ENCODE measurements at regions of chr9 and their contacts with region 1.

Region 1: GRCh38 chr9:129610473-129611301 is 10.2 kb downstream of the C9orf50 start:
- DNase-seq: peak; percentile 72 to 76 (median 74)
- H3K4me3 ChIP-seq: peak overlapping the region; percentile 61 to 70
- H3K4me3 Mint-ChIP-seq: peak overlapping the region; percentile 78 to 95 (median 81)
- H3K27ac ChIP-seq: peak overlapping the region; percentile 50
- H3K27ac Mint-ChIP-seq: peak overlapping the region; percentile 65 to 95 (median 88)
- H3K4me1 ChIP-seq: peaks cover 28% of the 10 kb centered on the region
- H3K4me1 Mint-ChIP-seq: peaks cover 16 to 45% (median 33%) of the 10 kb centered on the region in 4 donors
- H3K27me3 ChIP-seq: no peaks in the 10 kb centered on the region
- H3K27me3 Mint-ChIP-seq: no peaks in the 10 kb centered on the region

Region 2: GRCh38 chr9:129139993-129140396 is 470.7 kb before region 1 on chr9:
- CTCF ChIA-PET with region 1: interaction called, 25 read pairs
- POLR2A ChIA-PET with region 1: interaction called, 42 read pairs
- intact Hi-C with region 1: loop called (anchors 1 kb)
- DNase-seq: peak; percentile 70 to 92 (median 73)
- H3K4me3 ChIP-seq: peak overlapping the region; percentile 78 to 82
- H3K4me3 Mint-ChIP-seq: peak overlapping the region; percentile 86 to 95 (median 90)
- H3K27ac ChIP-seq: peak overlapping the region; percentile 90
- H3K27ac Mint-ChIP-seq: peak overlapping the region; percentile 90 to 99 (median 92)
- H3K4me1 ChIP-seq: peaks cover 38% of the 10 kb centered on the region
- H3K4me1 Mint-ChIP-seq: peaks cover 15 to 37% (median 29%) of the 10 kb centered on the region in 4 donors
- H3K27me3 ChIP-seq: no peaks in the 10 kb centered on the region
- H3K27me3 Mint-ChIP-seq: no peaks in the 10 kb centered on the region

Region 3: GRCh38 chr9:129320575-129321263 is 290.0 kb before region 1 on chr9:
- CTCF ChIA-PET with region 1: interaction called, 3 read pairs
- POLR2A ChIA-PET with region 1: interaction called, 4 read pairs
- intact Hi-C with region 1: loop called (anchors 1 kb)
- DNase-seq: peak; percentile 63 to 74 (median 68)
- H3K4me3 ChIP-seq: peak overlapping the region in 1 of 2 donors; percentile 51
- H3K4me3 Mint-ChIP-seq: peak overlapping the region; percentile 62 to 90 (median 82)
- H3K27ac ChIP-seq: no peak overlapping the region
- H3K27ac Mint-ChIP-seq: peak overlapping the region in 6 of 7 donors; percentile 50 to 97 (median 78)
- H3K4me1 ChIP-seq: peaks cover 20% of the 10 kb centered on the region
- H3K4me1 Mint-ChIP-seq: peaks cover 5 to 20% (median 9%) of the 10 kb centered on the region in 4 donors
- H3K27me3 ChIP-seq: no peaks in the 10 kb centered on the region
- H3K27me3 Mint-ChIP-seq: peaks cover 0 to 1% of the 10 kb centered on the region in 2 donors

Region 4: DNA sequence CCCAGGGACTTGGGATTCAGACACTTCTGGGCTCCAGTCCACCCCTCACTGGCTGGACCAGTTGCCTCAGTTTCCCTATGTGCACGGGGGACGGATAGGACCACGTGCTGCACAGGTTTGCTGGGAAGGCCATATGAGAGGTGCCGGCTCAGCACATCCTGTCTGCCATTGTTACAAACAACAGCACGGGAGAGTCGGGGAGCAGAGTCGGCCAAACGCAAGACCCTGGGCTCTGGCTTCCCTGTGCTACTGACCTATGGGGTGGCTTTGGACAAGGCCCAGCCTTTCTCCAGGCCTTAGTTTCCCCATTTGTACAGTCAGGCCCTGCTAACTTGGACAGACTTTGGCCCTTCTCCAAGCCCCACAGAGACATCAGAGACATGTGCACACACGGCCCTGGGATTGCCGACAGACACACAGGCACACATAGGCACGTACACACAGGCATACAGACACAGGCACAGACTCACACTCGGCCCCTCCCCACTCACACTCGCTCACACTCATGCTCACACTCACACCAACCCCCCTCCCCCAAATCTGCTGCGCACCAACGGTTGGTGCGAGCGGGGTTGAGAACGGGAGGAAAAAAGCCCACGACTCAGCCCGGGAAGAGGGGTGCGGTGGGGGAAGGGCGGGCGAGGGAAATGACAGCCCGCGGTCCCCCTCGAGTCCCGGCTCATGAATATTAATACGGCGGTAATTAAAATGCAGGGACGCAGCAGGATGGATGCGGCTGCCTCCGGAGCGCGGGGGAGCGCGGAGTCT is 122.9 kb before region 1 on chr9:
- CTCF ChIA-PET with region 1: no interaction called
- POLR2A ChIA-PET with region 1: no interaction called
- intact Hi-C with region 1: loop called (anchors 1 kb)
- DNase-seq: peak in 2 of 5 donors; percentile 50 to 73
- H3K4me3 ChIP-seq: peak overlapping the region; percentile 38 to 52
- H3K4me3 Mint-ChIP-seq: peak overlapping the region; percentile 87 to 93 (median 90)
- H3K27ac ChIP-seq: peak overlapping the region; percentile 91
- H3K27ac Mint-ChIP-seq: peak overlapping the region; percentile 93 to 100 (median 98)
- H3K4me1 ChIP-seq: peaks cover 65% of the 10 kb centered on the region
- H3K4me1 Mint-ChIP-seq: peaks cover 33 to 80% (median 54%) of the 10 kb centered on the region in 4 donors
- H3K27me3 ChIP-seq: no peaks in the 10 kb centered on the region
- H3K27me3 Mint-ChIP-seq: peaks cover 0 to 3% of the 10 kb centered on the region in 2 donors

Region 5: DNA sequence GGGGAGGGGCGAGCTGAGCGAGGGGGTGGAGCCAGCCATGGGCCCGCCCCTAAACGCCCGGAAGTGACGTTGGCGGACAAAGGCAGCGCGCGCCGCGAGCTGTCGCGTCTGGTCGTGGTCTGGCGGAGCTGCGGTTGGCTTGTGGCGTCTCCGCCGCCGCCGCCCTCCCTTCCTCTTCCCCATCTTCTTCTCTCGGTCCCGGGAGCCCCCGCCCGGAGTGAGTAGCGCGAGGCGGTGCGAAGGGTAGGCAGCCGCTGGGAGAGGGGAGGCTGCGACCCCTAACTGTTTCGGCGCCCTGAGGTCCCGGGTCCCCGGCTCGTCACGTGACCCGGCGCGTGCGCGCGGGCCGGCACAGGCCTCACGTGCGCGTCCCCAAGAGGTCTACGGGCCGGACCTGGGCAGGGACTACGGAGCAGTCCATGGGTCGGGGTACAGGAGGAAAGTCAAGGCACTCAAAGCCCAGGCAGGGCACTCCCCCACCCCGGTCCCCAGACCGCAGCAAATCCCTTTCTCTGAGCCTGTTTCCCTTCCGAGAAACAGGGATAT is 15.5 kb after region 1 on chr9 and contains the start of gene NTMT1:
- CTCF ChIA-PET with region 1: interaction called, 51 read pairs
- POLR2A ChIA-PET with region 1: interaction called, 6 read pairs
- intact Hi-C with region 1: no loop called
- DNase-seq: peak; percentile 88 to 91 (median 90)
- H3K4me3 ChIP-seq: peak within 1 kb of the TSS; percentile 80 to 98
- H3K4me3 Mint-ChIP-seq: peak within 1 kb of the TSS; percentile 84 to 93 (median 89)
- H3K27ac ChIP-seq: peak within 1 kb of the TSS; percentile 91
- H3K27ac Mint-ChIP-seq: peak within 1 kb of the TSS; percentile 89 to 96 (median 95)
- H3K4me1 ChIP-seq: peaks cover 48% of the 10 kb centered on the region
- H3K4me1 Mint-ChIP-seq: peaks cover 27 to 72% (median 53%) of the 10 kb centered on the region in 4 donors
- H3K27me3 ChIP-seq: peaks cover under 1% of the 10 kb centered on the region
- H3K27me3 Mint-ChIP-seq: peaks cover 5 to 14% of the 10 kb centered on the region in 2 donors
- total RNA-seq, gene NTMT1: 45.0 to 45.3 TPM

Region 6: DNA sequence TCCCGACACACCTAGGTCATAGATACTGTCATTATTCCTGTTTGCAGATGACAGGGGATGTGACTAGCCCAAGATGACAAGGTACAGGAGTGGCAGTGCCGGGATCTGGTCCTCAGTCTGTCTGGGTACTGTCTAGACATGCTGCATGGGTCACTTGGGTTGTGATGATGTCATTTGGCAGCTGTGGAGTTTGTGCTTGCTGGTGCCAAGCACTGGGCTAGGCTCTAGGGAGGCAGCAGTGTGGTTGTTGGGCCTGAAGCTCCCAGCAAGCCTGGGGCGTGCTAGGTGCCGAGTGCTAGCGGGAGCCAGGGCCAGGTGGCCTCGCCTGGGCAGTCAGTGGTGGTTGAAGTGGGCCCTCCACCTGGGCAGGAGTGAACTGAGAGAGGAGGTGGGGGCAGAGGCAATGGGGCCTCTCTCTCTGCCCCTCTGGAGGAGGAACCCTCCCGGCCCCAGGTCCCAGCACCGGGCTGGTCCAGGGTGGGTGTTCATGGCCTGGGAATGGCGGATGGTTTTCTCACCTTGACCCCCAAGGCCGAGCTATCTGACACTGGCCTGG is 40.1 kb after region 1 on chr9:
- CTCF ChIA-PET with region 1: no interaction called
- POLR2A ChIA-PET with region 1: no interaction called
- intact Hi-C with region 1: no loop called
- DNase-seq: no peak
- H3K4me3 ChIP-seq: no peak overlapping the region
- H3K4me3 Mint-ChIP-seq: no peak overlapping the region
- H3K27ac ChIP-seq: no peak overlapping the region
- H3K27ac Mint-ChIP-seq: peak overlapping the region in 1 of 7 donors; percentile 27
- H3K4me1 ChIP-seq: no peaks in the 10 kb centered on the region
- H3K4me1 Mint-ChIP-seq: no peaks in the 10 kb centered on the region
- H3K27me3 ChIP-seq: no peaks in the 10 kb centered on the region
- H3K27me3 Mint-ChIP-seq: peaks cover 0 to 5% of the 10 kb centered on the region in 2 donors

Region 7: GRCh38 chr9:129868916-129869486 is 258.3 kb after region 1 on chr9:
- CTCF ChIA-PET with region 1: no interaction called
- POLR2A ChIA-PET with region 1: no interaction called
- intact Hi-C with region 1: no loop called
- DNase-seq: peak; percentile 94 to 98 (median 96)
- H3K4me3 ChIP-seq: peak overlapping the region; percentile 12 to 51
- H3K4me3 Mint-ChIP-seq: peak overlapping the region; percentile 59 to 78 (median 69)
- H3K27ac ChIP-seq: peak overlapping the region; percentile 90
- H3K27ac Mint-ChIP-seq: peak overlapping the region; percentile 86 to 98 (median 94)
- H3K4me1 ChIP-seq: peaks cover 89% of the 10 kb centered on the region
- H3K4me1 Mint-ChIP-seq: peaks cover 46 to 93% (median 73%) of the 10 kb centered on the region in 4 donors
- H3K27me3 ChIP-seq: no peaks in the 10 kb centered on the region
- H3K27me3 Mint-ChIP-seq: no peaks in the 10 kb centered on the region